ENCODE measurements at regions of chr4 and their contacts with region 1.

Region 1: GRCh38 chr4:152494020-152494419 is 41.9 kb downstream of the FBXW7 start:
- DNase-seq: no peak
- H3K4me3 ChIP-seq: no peak overlapping the region
- H3K27ac ChIP-seq: no peak overlapping the region
- H3K4me1 ChIP-seq: no peaks in the 10 kb centered on the region
- H3K27me3 ChIP-seq: no peaks in the 10 kb centered on the region
- CTCF ChIP-seq: no peak
- POLR2A ChIP-seq: no peak

Region 2: GRCh38 chr4:152398060-152398459 is 96.0 kb before region 1 on chr4:
- intact Hi-C with region 1: no loop called
- DNase-seq: no peak
- H3K4me3 ChIP-seq: no peak overlapping the region
- H3K27ac ChIP-seq: no peak overlapping the region
- H3K4me1 ChIP-seq: no peaks in the 10 kb centered on the region
- H3K27me3 ChIP-seq: no peaks in the 10 kb centered on the region
- CTCF ChIP-seq: peak in 5 of 6 experiments; percentile 18 to 46 (median 32)
- POLR2A ChIP-seq: no peak

Region 3: DNA sequence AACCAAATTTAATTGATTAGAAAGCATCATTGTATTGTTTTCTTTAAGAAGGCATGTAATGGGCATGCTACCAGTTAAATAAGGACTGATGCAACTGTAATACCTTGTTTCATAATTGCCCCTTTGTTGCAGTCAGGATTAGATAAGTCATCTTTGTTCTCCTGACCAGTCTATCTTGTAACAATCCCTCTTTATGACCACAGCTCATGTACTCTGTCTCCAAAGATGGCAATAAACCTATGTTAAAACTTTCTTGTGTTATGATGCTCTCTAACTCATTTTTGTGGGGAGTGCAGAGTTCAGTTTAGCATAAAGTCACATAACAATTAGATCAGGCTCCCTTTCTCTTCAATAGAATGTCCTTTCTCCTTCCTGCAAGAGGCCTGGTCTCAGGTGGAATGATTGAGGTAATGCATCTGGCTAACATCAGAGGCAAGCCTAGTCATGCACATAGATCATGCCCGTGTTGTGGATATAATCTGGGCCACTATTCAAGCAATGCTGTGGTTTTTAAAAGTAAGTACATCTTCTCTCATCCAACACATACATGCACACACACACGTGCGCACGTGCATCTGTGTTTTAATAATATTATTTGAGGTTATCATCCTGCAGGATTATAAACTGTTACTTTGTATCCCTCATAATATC is 140.2 kb after region 1 on chr4:
- intact Hi-C with region 1: loop called (anchors 5 kb)
- DNase-seq: no peak
- H3K4me3 ChIP-seq: no peak overlapping the region
- H3K27ac ChIP-seq: no peak overlapping the region
- H3K4me1 ChIP-seq: peaks cover 0 to 4% (median 0%) of the 10 kb centered on the region in 3 donors
- H3K27me3 ChIP-seq: no peaks in the 10 kb centered on the region
- CTCF ChIP-seq: no peak
- POLR2A ChIP-seq: no peak

Region 4: GRCh38 chr4:152935631-152936445 is 441.8 kb after region 1 on chr4 and contains the start of gene FHDC1:
- intact Hi-C with region 1: no loop called
- DNase-seq: no peak
- H3K4me3 ChIP-seq: peak within 1 kb of the TSS; percentile 71 to 91 (median 86)
- H3K27ac ChIP-seq: peak within 1 kb of the TSS; percentile 76 to 85 (median 80)
- H3K4me1 ChIP-seq: peaks cover 6 to 59% (median 8%) of the 10 kb centered on the region in 3 donors
- H3K27me3 ChIP-seq: peaks cover 0 to 48% (median 0%) of the 10 kb centered on the region in 4 donors
- CTCF ChIP-seq: peak in 3 of 6 experiments; percentile 8 to 33 (median 26)
- POLR2A ChIP-seq: peak in 2 of 4 donors; percentile 27 to 70
- total RNA-seq, gene FHDC1: 4.5 to 12.8 (median 8.5) TPM